H1 (cell line): ENCODE measurements at regions of chr2 and their contacts with region 1.

Region 1: GRCh38 chr2:11411768-11412448 is 54.1 kb downstream of the E2F6 start:
- DNase-seq: peak in 1 of 2 experiments; percentile 65
- H3K4me3 ChIP-seq: no peak overlapping the region
- H3K27ac ChIP-seq: no peak overlapping the region
- H3K4me1 ChIP-seq: no peaks in the 10 kb centered on the region
- H3K27me3 ChIP-seq: no peaks in the 10 kb centered on the region
- CTCF ChIP-seq: peak; percentile 65 to 84 (median 80)
- EP300 ChIP-seq: no peak
- POLR2A ChIP-seq: no peak
- RAD21 ChIP-seq: peak; percentile 91 to 93

Region 2: DNA sequence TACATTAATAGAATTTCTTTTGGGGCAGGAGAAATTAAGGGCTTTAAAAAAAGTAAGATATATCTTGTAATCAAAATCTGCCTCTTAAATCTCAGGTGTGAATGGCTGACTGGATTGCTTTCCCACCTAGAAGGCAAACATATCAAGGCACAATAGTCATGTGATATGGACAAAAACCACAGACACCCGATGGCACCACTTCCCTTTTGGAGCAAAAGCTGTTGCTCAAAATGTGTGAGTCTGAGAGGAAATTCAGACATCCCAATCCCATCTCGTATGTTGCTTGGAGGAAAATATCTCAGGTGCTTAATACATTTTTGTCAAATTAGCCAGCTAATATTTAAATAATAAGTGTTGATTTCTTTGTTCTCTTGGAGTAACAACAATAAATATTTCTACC is 379.5 kb before region 1 on chr2:
- CTCF ChIA-PET with region 1: no interaction called
- POLR2A ChIA-PET with region 1: no interaction called
- DNase-seq: no peak
- H3K4me3 ChIP-seq: no peak overlapping the region
- H3K27ac ChIP-seq: no peak overlapping the region
- H3K4me1 ChIP-seq: no peaks in the 10 kb centered on the region
- H3K27me3 ChIP-seq: no peaks in the 10 kb centered on the region
- CTCF ChIP-seq: no peak
- EP300 ChIP-seq: no peak
- POLR2A ChIP-seq: no peak
- RAD21 ChIP-seq: no peak

Region 3: GRCh38 chr2:11160731-11161455 is 251.0 kb before region 1 on chr2:
- CTCF ChIA-PET with region 1: interaction called, 10 read pairs
- POLR2A ChIA-PET with region 1: no interaction called
- DNase-seq: no peak
- H3K4me3 ChIP-seq: no peak overlapping the region
- H3K27ac ChIP-seq: no peak overlapping the region
- H3K4me1 ChIP-seq: peaks cover 0 to under 1% (median 0%) of the 10 kb centered on the region in 4 experiments; a peak in 1 of 7 replicates
- H3K27me3 ChIP-seq: peaks cover 0 to 5% (median 2%) of the 10 kb centered on the region in 4 experiments; a peak in 3 of 7 replicates
- CTCF ChIP-seq: no peak
- EP300 ChIP-seq: no peak
- POLR2A ChIP-seq: no peak
- RAD21 ChIP-seq: no peak

Region 4: GRCh38 chr2:11234309-11234708 is 177.6 kb before region 1 on chr2:
- CTCF ChIA-PET with region 1: interaction called, 20 read pairs
- POLR2A ChIA-PET with region 1: no interaction called
- DNase-seq: no peak
- H3K4me3 ChIP-seq: no peak overlapping the region
- H3K27ac ChIP-seq: no peak overlapping the region
- H3K4me1 ChIP-seq: no peaks in the 10 kb centered on the region
- H3K27me3 ChIP-seq: no peaks in the 10 kb centered on the region
- CTCF ChIP-seq: peak in 1 of 3 experiments; percentile 13; a peak in 2 of 4 replicates
- EP300 ChIP-seq: no peak
- POLR2A ChIP-seq: no peak
- RAD21 ChIP-seq: peak in 1 of 2 experiments; percentile 35; a peak in 3 of 4 replicates

Region 5: GRCh38 chr2:11270891-11271290 is 141.0 kb before region 1 on chr2:
- CTCF ChIA-PET with region 1: no interaction called
- POLR2A ChIA-PET with region 1: no interaction called
- DNase-seq: no peak
- H3K4me3 ChIP-seq: no peak overlapping the region
- H3K27ac ChIP-seq: no peak overlapping the region
- H3K4me1 ChIP-seq: no peaks in the 10 kb centered on the region
- H3K27me3 ChIP-seq: no peaks in the 10 kb centered on the region
- CTCF ChIP-seq: no peak
- EP300 ChIP-seq: no peak
- POLR2A ChIP-seq: no peak
- RAD21 ChIP-seq: no peak

Region 6: DNA sequence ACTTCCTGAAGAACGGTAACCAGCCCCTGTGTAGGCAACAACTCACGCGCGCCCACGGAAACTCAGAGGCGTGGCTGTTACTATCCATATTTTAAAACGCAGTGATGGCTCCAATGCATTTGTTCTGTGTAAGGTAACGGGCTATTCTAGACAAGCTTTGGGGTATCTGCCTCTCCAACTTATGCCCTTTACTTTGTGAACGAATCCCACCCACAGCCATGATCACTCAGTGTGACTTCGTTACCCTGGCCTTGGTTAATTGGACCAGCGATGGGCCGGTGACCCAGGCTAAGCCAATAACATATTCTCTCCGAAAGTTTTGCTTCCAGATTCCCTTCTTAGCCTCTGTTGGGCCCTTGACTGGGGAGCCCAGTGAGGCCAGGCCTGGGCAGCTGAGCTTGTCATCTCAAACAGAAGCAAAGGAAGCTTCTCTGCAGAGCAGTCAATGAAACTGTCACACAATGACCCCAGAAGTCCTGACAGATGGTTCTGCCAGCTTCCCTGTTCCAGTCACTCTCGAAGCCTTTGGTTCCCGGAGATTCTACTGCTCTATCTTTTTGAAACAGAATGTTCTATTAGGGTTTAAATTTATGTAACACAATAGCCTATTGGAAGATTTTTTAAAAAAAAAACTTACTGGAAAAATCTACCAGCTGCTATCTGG is 36.8 kb before region 1 on chr2:
- CTCF ChIA-PET with region 1: interaction called, 11 read pairs
- POLR2A ChIA-PET with region 1: no interaction called
- DNase-seq: no peak
- H3K4me3 ChIP-seq: no peak overlapping the region
- H3K27ac ChIP-seq: no peak overlapping the region
- H3K4me1 ChIP-seq: peaks cover 0 to 6% (median 4%) of the 10 kb centered on the region in 4 experiments; a peak in 5 of 7 replicates
- H3K27me3 ChIP-seq: no peaks in the 10 kb centered on the region
- CTCF ChIP-seq: no peak
- EP300 ChIP-seq: no peak
- POLR2A ChIP-seq: no peak
- RAD21 ChIP-seq: no peak

Region 7: GRCh38 chr2:11398747-11399437 is 13.0 kb before region 1 on chr2:
- CTCF ChIA-PET with region 1: interaction called, 22 read pairs
- POLR2A ChIA-PET with region 1: no interaction called
- DNase-seq: no peak
- H3K4me3 ChIP-seq: no peak overlapping the region
- H3K27ac ChIP-seq: no peak overlapping the region
- H3K4me1 ChIP-seq: peaks cover 0 to 5% (median 0%) of the 10 kb centered on the region in 4 experiments; a peak in 2 of 7 replicates
- H3K27me3 ChIP-seq: no peaks in the 10 kb centered on the region
- CTCF ChIP-seq: no peak
- EP300 ChIP-seq: no peak
- POLR2A ChIP-seq: no peak
- RAD21 ChIP-seq: no peak

Region 8: DNA sequence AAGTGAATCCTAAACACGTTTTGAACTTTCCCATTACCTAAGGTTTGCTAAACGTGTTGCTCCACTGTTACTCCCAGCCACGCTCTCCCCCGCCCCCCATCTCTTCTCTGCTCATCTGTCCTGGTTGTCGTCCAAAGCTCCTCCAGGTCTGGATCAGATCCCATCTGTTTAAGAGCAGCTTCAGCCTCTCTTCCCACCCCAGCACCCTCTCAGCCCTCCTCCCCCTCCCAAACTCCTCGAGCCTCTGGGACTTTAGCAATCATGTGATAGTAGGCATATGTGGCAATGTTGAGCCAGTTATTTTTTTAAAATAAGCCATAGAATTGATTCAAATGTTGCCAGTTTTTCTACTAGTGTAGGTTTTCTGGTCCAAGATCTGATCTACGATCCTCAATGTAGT is 314.5 kb after region 1 on chr2:
- CTCF ChIA-PET with region 1: no interaction called
- POLR2A ChIA-PET with region 1: no interaction called
- DNase-seq: no peak
- H3K4me3 ChIP-seq: no peak overlapping the region
- H3K27ac ChIP-seq: no peak overlapping the region
- H3K4me1 ChIP-seq: peaks cover 0 to 3% (median 0%) of the 10 kb centered on the region in 4 experiments; a peak in 3 of 7 replicates
- H3K27me3 ChIP-seq: no peaks in the 10 kb centered on the region
- CTCF ChIP-seq: no peak
- EP300 ChIP-seq: no peak
- POLR2A ChIP-seq: no peak
- RAD21 ChIP-seq: no peak